AG04450 (cell line): ENCODE measurements at regions of chr17 and their contacts with region 1.

Region 1: GRCh38 chr17:8222630-8223356 is 12.4 kb upstream of the AURKB start:
- DNase-seq: peak; percentile 93
- H3K4me3 ChIP-seq: peak overlapping the region; percentile 87
- H3K27ac ChIP-seq: peak overlapping the region; percentile 92
- H3K27me3 ChIP-seq: no peaks in the 10 kb centered on the region
- CTCF ChIP-seq: no peak

Region 2: DNA sequence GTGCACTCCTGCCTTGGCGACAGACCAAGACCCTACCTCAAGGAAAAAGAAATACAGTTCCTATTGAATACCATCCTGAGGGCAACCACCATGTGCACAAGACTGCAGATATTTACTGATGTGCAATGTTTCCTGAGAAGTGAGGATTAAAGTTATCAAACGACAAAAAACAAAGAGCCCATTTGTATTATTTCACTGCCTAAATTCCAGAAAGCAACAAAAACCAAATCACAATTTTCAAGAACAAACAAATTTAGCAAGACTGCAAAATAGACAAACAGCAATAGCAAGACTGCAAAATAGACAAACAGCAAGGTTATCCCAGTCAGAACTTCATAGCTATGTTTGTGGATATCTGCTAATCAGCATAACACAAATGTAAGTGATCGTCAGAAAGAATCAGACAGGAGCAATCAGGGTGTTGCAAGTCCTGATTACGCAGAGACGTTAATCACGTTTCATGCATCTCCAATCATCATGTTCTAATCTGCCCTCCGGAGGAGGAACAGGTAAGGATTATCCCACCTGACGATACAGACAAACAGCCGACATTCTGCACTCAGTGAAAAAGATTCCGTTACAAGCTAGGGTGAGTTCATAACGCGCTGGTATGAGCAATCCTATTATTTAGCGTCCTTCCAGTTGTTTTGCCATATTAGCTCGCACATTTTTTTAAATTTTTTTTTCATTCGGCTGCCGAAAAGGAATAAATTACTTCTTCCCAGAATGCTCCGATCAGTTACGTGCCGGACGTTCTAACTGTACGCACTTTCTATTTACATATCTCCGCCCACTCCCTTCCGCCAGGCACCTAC is 49.5 kb before region 1 on chr17:
- CTCF ChIA-PET with region 1: no interaction called
- POLR2A ChIA-PET with region 1: interaction called, 12 read pairs
- DNase-seq: peak; percentile 96
- H3K4me3 ChIP-seq: peak overlapping the region; percentile 60
- H3K27ac ChIP-seq: peak overlapping the region; percentile 98
- H3K27me3 ChIP-seq: no peaks in the 10 kb centered on the region
- CTCF ChIP-seq: no peak

Region 3: DNA sequence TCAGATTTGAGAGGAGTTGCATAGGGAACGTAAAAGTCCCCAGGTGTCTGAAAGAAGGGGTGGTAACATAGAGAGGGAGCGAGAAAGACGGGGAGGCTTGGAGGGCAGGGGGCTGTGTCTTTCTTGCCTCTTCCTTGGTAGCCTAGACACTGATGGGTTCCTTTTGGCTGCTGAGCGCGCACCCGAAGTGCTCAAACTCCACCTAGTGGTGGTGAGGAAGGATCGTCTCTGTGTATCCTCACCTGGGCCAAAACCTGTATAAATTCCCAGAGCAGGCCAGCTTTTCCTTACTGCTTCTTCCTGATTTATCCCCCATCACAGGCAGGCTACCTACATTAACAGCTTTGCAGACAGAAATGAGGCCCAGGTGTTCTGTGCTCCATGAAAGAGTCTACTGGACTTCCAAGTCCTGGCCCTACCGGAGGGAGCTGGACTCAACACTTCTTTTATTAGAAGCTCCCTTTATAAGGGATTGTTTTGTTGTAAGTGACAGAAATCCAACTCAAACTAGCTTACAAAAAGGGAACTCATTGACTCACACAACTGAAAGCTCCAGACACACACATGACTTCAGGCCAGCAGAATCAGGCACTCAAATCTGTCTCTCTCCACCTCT is 77.9 kb after region 1 on chr17:
- CTCF ChIA-PET with region 1: interaction called, 15 read pairs
- POLR2A ChIA-PET with region 1: interaction called, 5 read pairs
- DNase-seq: no peak
- H3K4me3 ChIP-seq: no peak overlapping the region
- H3K27ac ChIP-seq: no peak overlapping the region
- H3K27me3 ChIP-seq: no peaks in the 10 kb centered on the region
- CTCF ChIP-seq: peak; percentile 90

Region 4: DNA sequence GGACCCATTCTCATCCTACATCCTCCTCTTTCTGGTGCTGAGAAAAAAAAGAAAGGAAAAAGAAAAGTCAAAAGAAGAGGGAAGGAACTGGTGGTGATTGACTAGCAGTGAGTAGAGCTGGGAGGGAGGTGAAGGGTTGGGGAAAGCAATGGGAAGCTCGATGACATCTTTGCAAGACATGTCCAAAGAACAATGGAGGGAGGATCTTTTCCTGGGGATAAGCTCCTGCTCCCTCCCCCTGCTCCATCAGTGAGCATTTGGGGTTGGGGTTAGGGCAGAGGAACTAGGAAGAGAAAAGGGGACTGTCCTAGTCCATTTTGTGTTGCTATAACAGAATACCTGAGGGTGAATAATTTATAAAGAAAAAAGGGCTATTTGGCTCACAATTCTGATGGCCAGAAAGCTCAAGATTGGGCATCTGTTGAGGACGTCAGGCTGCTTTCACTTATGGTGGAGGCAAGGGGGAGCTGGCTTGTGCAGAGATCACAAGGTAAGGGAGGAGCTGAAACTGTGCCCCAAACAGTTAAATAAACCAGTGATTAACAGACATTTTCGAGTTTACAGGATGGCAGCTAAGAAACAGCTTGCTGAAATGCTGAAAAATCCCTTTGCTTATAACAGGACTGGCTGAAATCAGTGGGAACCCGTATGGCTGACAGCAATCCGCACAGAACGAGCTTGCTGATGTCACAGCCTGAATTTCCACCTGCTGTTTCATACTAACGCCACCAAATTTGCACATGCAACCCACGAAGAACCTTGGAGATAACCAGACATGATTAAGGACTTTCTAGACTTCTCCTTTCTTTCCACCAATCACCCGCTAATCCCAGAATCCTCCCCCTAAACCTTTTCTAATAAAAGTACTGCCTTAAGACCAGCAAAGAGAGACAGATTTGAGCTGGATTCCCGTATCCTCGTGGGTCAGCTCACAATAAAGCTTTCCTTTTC is 115.3 kb after region 1 on chr17:
- CTCF ChIA-PET with region 1: no interaction called
- POLR2A ChIA-PET with region 1: no interaction called
- DNase-seq: no peak
- H3K4me3 ChIP-seq: peak overlapping the region; percentile 35
- H3K27ac ChIP-seq: no peak overlapping the region
- H3K27me3 ChIP-seq: peaks cover 15% of the 10 kb centered on the region
- CTCF ChIP-seq: no peak